Activated CD4-positive, alpha-beta memory T cell treated with anti-CD3 and anti-CD28 coated beads, Interleukin-2, amount 10 ng/mL, durations not matched to agents 7 days and 5 days (primary cell): ENCODE measurements at regions of chr1 and their contacts with region 1.

Region 1: GRCh38 chr1:27300341-27301051 is 21.5 kb upstream of the TMEM222 start:
- DNase-seq: peak; percentile 78
- H3K4me3 Mint-ChIP-seq: no peak overlapping the region
- H3K27ac Mint-ChIP-seq: no peak overlapping the region
- H3K4me1 Mint-ChIP-seq: peaks cover 4% of the 10 kb centered on the region
- H3K27me3 Mint-ChIP-seq: no peaks in the 10 kb centered on the region

Region 2: GRCh38 chr1:27102707-27103491 is 197.6 kb before region 1 on chr1:
- CTCF ChIA-PET with region 1: interaction called, 10 read pairs
- POLR2A ChIA-PET with region 1: no interaction called
- DNase-seq: peak; percentile 82
- H3K4me3 Mint-ChIP-seq: no peak overlapping the region
- H3K27ac Mint-ChIP-seq: no peak overlapping the region
- H3K4me1 Mint-ChIP-seq: peaks cover 9% of the 10 kb centered on the region
- H3K27me3 Mint-ChIP-seq: no peaks in the 10 kb centered on the region

Region 3: GRCh38 chr1:27253596-27253995 is 46.9 kb before region 1 on chr1:
- CTCF ChIA-PET with region 1: no interaction called
- POLR2A ChIA-PET with region 1: no interaction called
- DNase-seq: no peak
- H3K4me3 Mint-ChIP-seq: no peak overlapping the region
- H3K27ac Mint-ChIP-seq: no peak overlapping the region
- H3K4me1 Mint-ChIP-seq: peaks cover 9% of the 10 kb centered on the region
- H3K27me3 Mint-ChIP-seq: no peaks in the 10 kb centered on the region

Region 4: GRCh38 chr1:27284425-27285273 is 15.8 kb before region 1 on chr1:
- CTCF ChIA-PET with region 1: interaction called, 18 read pairs
- POLR2A ChIA-PET with region 1: no interaction called
- DNase-seq: peak; percentile 88
- H3K4me3 Mint-ChIP-seq: no peak overlapping the region
- H3K27ac Mint-ChIP-seq: no peak overlapping the region
- H3K4me1 Mint-ChIP-seq: no peaks in the 10 kb centered on the region
- H3K27me3 Mint-ChIP-seq: no peaks in the 10 kb centered on the region

Region 5: DNA sequence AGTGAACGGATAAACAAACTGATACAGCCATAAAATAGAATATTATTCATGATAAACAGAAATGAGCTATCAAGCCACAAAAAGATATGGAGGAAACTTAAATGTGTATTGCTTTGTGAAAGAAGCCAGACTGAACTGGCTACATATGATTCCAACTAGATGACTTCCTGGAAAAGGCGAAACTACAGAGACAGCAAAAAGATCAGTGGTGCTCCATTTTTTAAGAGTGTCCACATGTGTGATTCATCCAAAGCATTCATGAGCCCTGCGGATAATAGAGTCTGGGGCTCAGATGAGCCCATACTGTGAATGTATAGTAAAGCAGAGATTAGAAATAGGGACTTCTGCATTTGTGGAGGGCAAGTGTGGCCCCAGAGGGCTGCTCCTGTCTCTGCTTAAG is 13.7 kb after region 1 on chr1:
- CTCF ChIA-PET with region 1: interaction called, 18 read pairs
- POLR2A ChIA-PET with region 1: interaction called, 3 read pairs
- DNase-seq: no peak
- H3K4me3 Mint-ChIP-seq: no peak overlapping the region
- H3K27ac Mint-ChIP-seq: no peak overlapping the region
- H3K4me1 Mint-ChIP-seq: no peaks in the 10 kb centered on the region
- H3K27me3 Mint-ChIP-seq: peaks cover 11% of the 10 kb centered on the region

Region 6: DNA sequence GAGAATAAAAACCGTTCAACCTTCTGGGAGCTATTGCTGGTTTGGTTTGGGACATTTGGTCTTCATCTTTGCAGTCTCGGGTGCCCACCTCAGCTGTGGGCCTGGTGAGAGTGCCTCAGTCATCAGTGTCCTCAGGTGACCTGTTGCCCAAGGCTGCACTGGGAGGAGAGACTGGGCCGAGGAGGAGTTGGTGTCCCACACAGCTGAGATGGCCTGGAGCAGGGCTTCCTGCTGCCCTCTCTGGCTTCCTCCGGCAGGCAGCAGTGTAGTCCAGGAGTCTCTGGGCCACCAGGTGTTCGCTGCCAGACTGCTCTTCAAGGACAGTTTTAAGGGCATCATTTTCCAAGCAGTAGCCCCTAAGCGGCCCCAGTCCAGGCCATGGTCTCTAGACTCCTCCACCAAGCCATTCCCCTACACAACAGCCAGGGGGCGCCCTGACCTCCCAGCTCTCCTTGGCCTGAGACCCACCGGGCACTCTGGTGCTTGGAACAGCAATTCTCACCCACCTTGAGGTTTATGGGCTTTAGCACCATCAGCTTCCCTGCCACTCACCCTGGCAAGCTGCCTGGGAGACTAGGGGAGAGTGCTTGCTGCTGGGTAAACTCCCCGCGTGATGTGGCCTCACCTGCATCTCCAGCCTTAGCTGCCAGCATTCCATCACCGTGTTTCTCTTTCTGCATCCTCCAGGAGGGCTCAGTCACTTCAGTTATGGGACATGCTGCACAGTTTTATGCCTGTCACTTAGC is 32.2 kb after region 1 on chr1:
- CTCF ChIA-PET with region 1: interaction called, 10 read pairs
- POLR2A ChIA-PET with region 1: no interaction called
- DNase-seq: peak; percentile 66
- H3K4me3 Mint-ChIP-seq: no peak overlapping the region
- H3K27ac Mint-ChIP-seq: peak overlapping the region; percentile 68
- H3K4me1 Mint-ChIP-seq: peaks cover 34% of the 10 kb centered on the region
- H3K27me3 Mint-ChIP-seq: no peaks in the 10 kb centered on the region

Region 7: GRCh38 chr1:27357281-27358037 is 57.0 kb after region 1 on chr1:
- CTCF ChIA-PET with region 1: interaction called, 11 read pairs
- POLR2A ChIA-PET with region 1: no interaction called
- DNase-seq: peak; percentile 87
- H3K4me3 Mint-ChIP-seq: peak overlapping the region; percentile 66
- H3K27ac Mint-ChIP-seq: peak overlapping the region; percentile 92
- H3K4me1 Mint-ChIP-seq: peaks cover 50% of the 10 kb centered on the region
- H3K27me3 Mint-ChIP-seq: peaks cover 8% of the 10 kb centered on the region

Region 8: GRCh38 chr1:27392096-27392777 is 91.7 kb after region 1 on chr1 and contains the start of gene GPR3:
- CTCF ChIA-PET with region 1: interaction called, 133 read pairs
- POLR2A ChIA-PET with region 1: interaction called, 24 read pairs
- DNase-seq: peak; percentile 95
- H3K4me3 Mint-ChIP-seq: peak within 1 kb of the TSS; percentile 74
- H3K27ac Mint-ChIP-seq: peak within 1 kb of the TSS; percentile 54
- H3K4me1 Mint-ChIP-seq: peaks cover 25% of the 10 kb centered on the region
- H3K27me3 Mint-ChIP-seq: peaks cover 3% of the 10 kb centered on the region
- total RNA-seq, gene GPR3: 0.58 to 0.65 TPM

Region 9: GRCh38 chr1:27489910-27490741 is 189.6 kb after region 1 on chr1 and contains the start of gene WASF2:
- CTCF ChIA-PET with region 1: no interaction called
- POLR2A ChIA-PET with region 1: no interaction called
- DNase-seq: peak; percentile 98
- H3K4me3 Mint-ChIP-seq: peak within 1 kb of the TSS; percentile 94
- H3K27ac Mint-ChIP-seq: peak within 1 kb of the TSS; percentile 96
- H3K4me1 Mint-ChIP-seq: peaks cover 42% of the 10 kb centered on the region
- H3K27me3 Mint-ChIP-seq: no peaks in the 10 kb centered on the region
- total RNA-seq, gene WASF2: 150 TPM